ENCODE measurements at regions of chr3 and their contacts with region 1.

Region 1: DNA sequence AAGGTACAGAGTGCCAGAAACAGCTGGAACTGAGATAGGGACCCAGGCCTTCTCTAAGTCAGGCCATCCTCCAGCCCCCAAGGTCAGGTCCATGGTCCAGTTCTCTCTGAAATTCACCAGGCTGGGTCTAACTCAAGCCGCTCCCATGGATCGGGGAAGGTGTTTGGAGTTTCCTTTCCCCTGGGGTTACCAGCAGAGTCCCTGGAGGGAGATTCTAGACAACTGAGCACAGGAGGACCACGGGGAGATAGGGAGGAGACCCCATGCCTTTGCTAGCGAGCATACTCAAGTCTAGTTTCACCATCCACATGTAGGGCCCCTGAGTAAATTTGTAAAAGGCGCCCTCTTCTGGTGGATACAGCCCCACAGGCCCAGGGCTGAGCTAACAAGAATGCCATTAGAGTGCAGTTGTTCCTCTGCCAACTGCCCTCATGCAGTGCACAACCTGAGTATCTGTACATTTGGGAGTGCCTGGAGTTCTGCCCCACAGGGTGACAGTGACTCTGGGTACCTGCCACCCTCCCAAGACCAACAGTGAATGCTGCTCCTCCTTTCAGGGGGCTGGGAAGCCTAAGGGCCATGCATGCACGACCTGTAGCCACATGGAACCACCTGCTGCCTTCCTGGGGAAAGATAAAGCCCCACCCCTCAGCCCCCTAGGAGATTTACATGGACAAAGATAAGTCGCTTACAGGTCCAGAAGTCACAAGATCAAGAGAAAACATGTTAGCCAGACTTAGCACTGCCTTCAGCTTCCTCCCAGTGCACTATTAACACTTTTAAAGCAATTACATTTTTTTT is 89.0 kb downstream of the IQSEC1 start:
- DNase-seq: peak in 8 of 9 experiments; percentile 40 to 77 (median 63)
- ATAC-seq: peak; percentile 89
- H3K4me3 ChIP-seq: no peak overlapping the region
- H3K4me3 Mint-ChIP-seq: no peak overlapping the region
- H3K27ac ChIP-seq: peak overlapping the region in 1 of 2 experiments; percentile 36
- H3K27ac Mint-ChIP-seq: no peak overlapping the region
- H3K4me1 ChIP-seq: peaks cover 43% of the 10 kb centered on the region
- H3K4me1 Mint-ChIP-seq: peaks cover 54% of the 10 kb centered on the region
- H3K27me3 ChIP-seq: no peaks in the 10 kb centered on the region
- H3K27me3 Mint-ChIP-seq: no peaks in the 10 kb centered on the region
- CTCF ChIP-seq: peak; percentile 63

Region 2: GRCh38 chr3:12868039-12869034 is 115.9 kb before region 1 on chr3:
- CTCF ChIA-PET with region 1: interaction called, 6 read pairs
- POLR2A ChIA-PET with region 1: no interaction called
- intact Hi-C with region 1: loop called (anchors 1 to 10 kb)
- DNase-seq: peak in 8 of 9 experiments; percentile 39 to 78 (median 60)
- ATAC-seq: peak; percentile 72
- H3K4me3 ChIP-seq: peak overlapping the region; percentile 42 to 47
- H3K4me3 Mint-ChIP-seq: peak overlapping the region; percentile 78
- H3K27ac ChIP-seq: no peak overlapping the region
- H3K27ac Mint-ChIP-seq: no peak overlapping the region
- H3K4me1 ChIP-seq: peaks cover 9% of the 10 kb centered on the region
- H3K4me1 Mint-ChIP-seq: peaks cover 13% of the 10 kb centered on the region
- H3K27me3 ChIP-seq: peaks cover 3 to 9% of the 10 kb centered on the region in 2 experiments
- H3K27me3 Mint-ChIP-seq: peaks cover 17% of the 10 kb centered on the region
- CTCF ChIP-seq: peak; percentile 73

Region 3: DNA sequence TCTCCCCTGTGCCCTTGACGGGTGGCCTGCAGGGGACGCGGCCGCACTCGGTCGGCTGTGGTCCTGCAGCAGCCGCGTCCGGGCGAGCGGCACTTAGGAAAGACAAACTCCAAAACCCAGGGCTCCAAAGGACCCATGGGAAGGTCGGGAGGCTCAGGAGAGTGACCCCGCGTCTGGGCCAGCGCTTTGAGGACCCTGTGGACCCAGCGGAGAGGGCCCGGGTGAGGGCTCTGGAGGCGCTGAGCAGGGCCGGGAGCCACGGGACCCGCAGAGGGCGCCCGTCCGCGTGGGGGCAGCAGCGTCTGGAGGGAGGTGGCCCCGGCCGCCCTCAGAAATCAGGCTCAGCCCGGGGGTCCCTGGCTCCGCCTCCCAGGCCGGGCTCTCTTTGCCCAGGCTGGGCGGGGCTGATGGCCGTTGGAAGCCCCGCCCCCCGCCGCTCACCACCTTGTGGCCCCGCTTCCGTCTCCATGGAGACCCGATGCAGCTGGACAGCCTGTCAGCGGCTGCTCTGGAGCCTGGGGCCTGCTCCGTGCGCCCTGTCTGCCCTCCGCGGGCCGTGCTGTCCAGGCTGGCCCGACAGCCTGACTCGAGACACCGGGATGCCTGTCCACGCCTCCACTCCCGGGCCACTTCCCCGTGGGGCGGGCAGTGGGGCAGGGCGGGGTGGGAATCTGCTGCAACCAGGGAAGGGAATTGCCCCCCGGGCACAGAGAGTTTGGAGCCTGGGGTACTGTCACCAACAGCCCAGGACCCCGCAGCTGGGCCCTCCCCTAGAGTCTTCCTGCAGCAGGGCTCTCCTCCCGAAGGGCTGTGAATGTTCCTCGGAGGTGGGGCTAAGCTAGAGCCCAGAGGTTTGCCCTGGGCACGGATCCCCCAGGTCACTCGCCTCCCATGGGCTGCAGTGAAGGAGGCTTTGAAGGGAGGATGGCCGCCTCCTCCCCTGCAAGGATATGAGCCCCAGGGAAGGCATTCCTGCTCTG is 108.1 kb before region 1 on chr3:
- CTCF ChIA-PET with region 1: interaction called, 3 read pairs
- POLR2A ChIA-PET with region 1: no interaction called
- intact Hi-C with region 1: loop called in 1 of 2 experiments (anchors 10 kb)
- DNase-seq: peak in 4 of 9 experiments; percentile 32 to 44 (median 40)
- ATAC-seq: peak; percentile 63
- H3K4me3 ChIP-seq: no peak overlapping the region
- H3K4me3 Mint-ChIP-seq: no peak overlapping the region
- H3K27ac ChIP-seq: no peak overlapping the region
- H3K27ac Mint-ChIP-seq: no peak overlapping the region
- H3K4me1 ChIP-seq: no peaks in the 10 kb centered on the region
- H3K4me1 Mint-ChIP-seq: no peaks in the 10 kb centered on the region
- H3K27me3 ChIP-seq: no peaks in the 10 kb centered on the region
- H3K27me3 Mint-ChIP-seq: peaks cover 15% of the 10 kb centered on the region
- CTCF ChIP-seq: no peak

Region 4: DNA sequence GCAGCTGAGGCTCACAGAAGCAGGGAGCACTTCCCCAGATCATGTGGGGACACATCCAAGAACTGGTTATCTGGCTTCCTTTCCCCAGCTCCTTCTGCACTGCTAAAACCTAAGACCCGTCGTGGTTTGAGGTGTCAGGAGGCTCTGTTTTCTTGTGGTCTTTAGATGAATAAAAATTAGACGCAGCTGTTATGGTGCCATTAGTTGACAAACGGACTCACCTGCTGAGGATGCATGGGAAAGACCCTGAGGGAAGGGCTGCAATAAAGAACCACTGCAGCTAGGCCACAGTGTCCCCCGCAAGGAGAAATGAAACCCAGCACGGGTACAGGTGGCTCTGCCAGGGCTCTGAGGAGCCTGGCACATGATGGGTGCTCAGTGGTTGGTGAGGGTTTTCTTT is 10.4 kb before region 1 on chr3:
- CTCF ChIA-PET with region 1: interaction called, 11 read pairs
- POLR2A ChIA-PET with region 1: no interaction called
- intact Hi-C with region 1: no loop called
- DNase-seq: peak in 1 of 9 experiments; percentile 45
- ATAC-seq: no peak
- H3K4me3 ChIP-seq: no peak overlapping the region
- H3K4me3 Mint-ChIP-seq: no peak overlapping the region
- H3K27ac ChIP-seq: no peak overlapping the region
- H3K27ac Mint-ChIP-seq: no peak overlapping the region
- H3K4me1 ChIP-seq: peaks cover 13% of the 10 kb centered on the region
- H3K4me1 Mint-ChIP-seq: peaks cover 46% of the 10 kb centered on the region
- H3K27me3 ChIP-seq: no peaks in the 10 kb centered on the region
- H3K27me3 Mint-ChIP-seq: no peaks in the 10 kb centered on the region
- CTCF ChIP-seq: no peak